ENCODE measurements at regions of chr3 and their contacts with region 1.

Region 1: DNA sequence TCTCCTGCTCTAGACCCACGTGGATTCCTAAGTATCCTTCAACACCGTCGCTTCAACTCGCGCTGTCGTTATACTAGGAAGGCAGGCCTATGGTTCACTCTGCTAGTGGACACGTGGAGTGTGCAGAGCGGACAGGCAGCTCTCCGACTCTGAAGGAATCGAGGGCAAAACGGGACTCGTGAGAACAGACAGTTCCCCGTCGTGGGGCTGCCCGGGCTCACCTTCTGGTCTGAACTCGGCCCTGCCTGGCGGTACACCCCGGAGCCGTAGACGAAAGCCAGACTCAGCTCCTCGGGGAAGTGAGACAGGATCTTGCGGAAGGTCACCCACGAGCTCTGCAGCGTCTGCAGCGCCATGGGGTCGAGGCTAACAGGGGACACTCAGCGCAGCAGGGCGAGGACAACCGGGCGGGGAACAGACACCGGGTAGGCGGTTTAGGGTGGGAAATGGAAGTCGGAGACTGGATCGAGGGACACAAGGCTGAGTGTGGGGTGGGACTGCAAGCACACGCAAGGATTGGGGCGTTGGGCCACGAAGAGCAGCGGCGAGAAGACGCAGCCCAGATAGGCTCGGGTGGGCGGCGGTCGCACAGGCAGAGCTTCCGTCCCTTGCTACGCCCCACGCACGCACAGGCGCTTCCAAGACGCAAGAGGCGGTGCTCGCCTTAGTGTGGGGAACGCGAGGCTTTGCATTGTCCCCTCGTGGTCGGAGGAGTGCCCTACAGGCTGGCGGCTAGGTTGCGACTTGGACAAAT is at the start of gene TAMM41:
- DNase-seq: peak; percentile 91 to 93
- ATAC-seq: peak; percentile 99 to 100 (median 100)
- H3K4me3 ChIP-seq: peak within 1 kb of the TSS; percentile 69 to 97 (median 79)
- H3K27ac ChIP-seq: peak within 1 kb of the TSS; percentile 33 to 96 (median 86)
- H3K4me1 ChIP-seq: peaks cover 4 to 30% (median 25%) of the 10 kb centered on the region in 9 donors
- H3K27me3 ChIP-seq: no peaks in the 10 kb centered on the region
- CTCF ChIP-seq: peak; percentile 65 to 94 (median 87)
- total RNA-seq, gene TAMM41: 8.1 to 12.2 (median 10.2) TPM

Region 2: GRCh38 chr3:10242182-10243065 is 1604.0 kb before region 1 on chr3:
- intact Hi-C with region 1: loop called in 1 of 10 experiments (anchors 5 kb)
- DNase-seq: peak in 1 of 2 donors; percentile 31
- ATAC-seq: peak in 6 of 8 donors; percentile 50 to 79 (median 58)
- H3K4me3 ChIP-seq: no peak overlapping the region
- H3K27ac ChIP-seq: peak overlapping the region in 2 of 10 donors; percentile 39 to 86
- H3K4me1 ChIP-seq: peaks cover 0 to 35% (median 0%) of the 10 kb centered on the region in 9 donors
- H3K27me3 ChIP-seq: no peaks in the 10 kb centered on the region
- CTCF ChIP-seq: no peak

Region 3: DNA sequence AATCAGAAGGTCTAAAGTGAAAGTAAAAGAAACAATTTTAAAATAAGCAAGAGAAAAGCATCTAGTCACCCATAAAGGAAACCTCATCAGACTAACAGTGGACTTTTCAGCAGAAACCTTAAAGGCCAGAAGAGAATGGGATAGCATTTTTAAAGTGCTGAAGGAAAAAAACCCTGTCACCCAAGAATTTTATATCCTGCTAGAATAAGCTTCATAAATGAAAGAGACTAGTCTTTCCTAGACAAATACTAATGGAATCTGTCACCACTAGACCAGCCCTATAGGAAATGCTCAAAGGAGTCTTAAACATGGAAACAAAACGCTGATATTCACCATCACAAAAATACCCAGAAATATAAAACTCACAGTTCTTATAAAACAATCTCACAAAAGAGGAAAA is 46.7 kb before region 1 on chr3:
- intact Hi-C with region 1: no loop called
- DNase-seq: no peak
- ATAC-seq: no peak
- H3K4me3 ChIP-seq: no peak overlapping the region
- H3K27ac ChIP-seq: no peak overlapping the region
- H3K4me1 ChIP-seq: no peaks in the 10 kb centered on the region
- H3K27me3 ChIP-seq: no peaks in the 10 kb centered on the region
- CTCF ChIP-seq: no peak

Region 4: DNA sequence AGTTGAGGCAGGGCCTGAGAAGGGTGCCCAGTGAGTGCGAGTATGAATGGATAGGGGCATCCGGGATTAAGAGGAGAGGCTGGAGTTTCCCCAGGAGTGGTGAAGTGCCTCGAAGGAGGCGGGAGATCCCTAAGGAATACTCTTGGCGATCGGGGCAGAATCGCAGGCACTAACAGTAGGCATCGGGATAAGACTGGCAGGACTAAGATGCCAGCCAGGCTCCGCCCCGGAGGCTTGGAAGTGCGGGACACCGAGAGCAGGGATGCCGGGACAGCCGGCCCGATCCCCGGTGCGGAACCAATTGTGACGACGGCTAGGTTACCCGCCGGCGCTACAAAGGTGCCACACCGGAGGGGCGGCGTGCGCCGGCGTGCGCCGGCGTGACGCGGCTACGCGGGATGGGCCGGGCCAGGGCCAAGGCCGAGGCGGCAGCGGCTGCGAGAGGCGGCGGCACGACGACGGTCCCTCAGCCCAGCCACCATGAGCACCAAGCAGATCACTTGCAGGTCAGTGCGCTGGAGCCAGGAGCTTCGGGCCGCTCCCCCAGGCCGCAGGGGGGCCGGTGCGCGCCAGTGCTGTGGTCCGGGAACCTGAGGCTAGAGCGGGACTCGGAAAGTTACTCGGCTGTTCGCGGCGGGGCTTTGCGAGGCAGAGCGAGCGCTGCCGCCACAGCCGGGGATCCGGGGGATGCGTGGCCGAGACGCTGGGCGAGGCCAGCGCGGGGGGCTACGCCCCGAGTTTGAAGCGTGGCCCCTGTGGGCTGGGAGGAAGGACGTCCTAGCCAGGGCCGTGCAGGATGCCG is 710.4 kb after region 1 on chr3 and contains the start of gene MKRN2:
- intact Hi-C with region 1: loop called in 1 of 10 experiments (anchors 10 kb)
- DNase-seq: peak; percentile 84 to 88
- ATAC-seq: peak; percentile 92 to 98 (median 96)
- H3K4me3 ChIP-seq: peak within 1 kb of the TSS; percentile 61 to 99 (median 86)
- H3K27ac ChIP-seq: peak within 1 kb of the TSS; percentile 93 to 98 (median 98)
- H3K4me1 ChIP-seq: peaks cover 9 to 64% (median 51%) of the 10 kb centered on the region in 9 donors
- H3K27me3 ChIP-seq: peaks cover 0 to 38% (median 6%) of the 10 kb centered on the region in 7 donors
- CTCF ChIP-seq: peak in 1 of 9 donors; percentile 14
- total RNA-seq, gene MKRN2: 31.3 to 51.0 (median 40.5) TPM